Activated T-helper 2 cell treated with anti-CD3 and anti-CD28 coated beads, Interferon-gamma antibody, Interleukin-2, Interleukin-4, amounts not matched to agents 10 μg/mL and 5 μg/mL and 100 μg/mL, durations not matched to agents 14 hours and 24 hours and 36 hours (primary cell): ENCODE measurements at regions of chr6 and their contacts with region 1.

Region 1: DNA sequence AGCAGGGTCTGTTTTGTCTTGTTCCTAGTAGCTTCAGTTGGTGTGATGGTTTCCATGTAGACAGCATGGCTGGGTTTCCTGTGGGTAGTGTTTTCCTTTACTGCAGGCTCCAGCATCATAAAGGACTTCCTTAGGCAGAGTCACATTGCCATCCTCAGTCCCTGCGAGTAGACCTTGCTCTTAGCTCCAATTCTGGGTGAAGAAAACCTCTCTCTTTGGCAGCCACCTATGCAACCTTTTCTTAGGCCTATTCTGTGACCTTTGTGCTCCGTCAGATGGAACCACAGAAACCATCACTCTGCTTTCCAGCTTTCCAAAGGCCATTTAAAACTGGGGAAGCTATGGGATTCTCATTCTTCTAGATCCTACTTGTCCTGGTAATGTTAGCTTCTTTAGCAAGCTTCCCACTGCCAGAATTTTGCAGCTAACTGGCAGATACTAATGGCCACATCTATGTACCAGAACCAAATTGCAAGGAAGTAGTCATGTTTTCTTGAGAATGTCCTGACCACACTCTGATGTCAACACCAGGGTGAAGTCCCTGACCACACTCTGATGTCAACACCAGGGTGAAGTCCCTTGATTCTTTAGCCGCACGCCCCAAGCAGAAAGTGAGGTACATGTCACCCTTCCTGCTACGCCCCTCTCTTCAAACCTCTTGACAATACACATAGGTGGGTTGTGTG is 646.6 kb upstream of the HS3ST5 start:
- DNase-seq: peak; percentile 61
- H3K4me3 Mint-ChIP-seq: no peak overlapping the region
- H3K27ac Mint-ChIP-seq: peak overlapping the region; percentile 98
- H3K4me1 Mint-ChIP-seq: peaks cover 23% of the 10 kb centered on the region
- H3K27me3 Mint-ChIP-seq: no peaks in the 10 kb centered on the region

Region 2: GRCh38 chr6:115016593-115016992 is 27.2 kb after region 1 on chr6:
- intact Hi-C with region 1: no loop called
- DNase-seq: no peak
- H3K4me3 Mint-ChIP-seq: no peak overlapping the region
- H3K27ac Mint-ChIP-seq: no peak overlapping the region
- H3K4me1 Mint-ChIP-seq: no peaks in the 10 kb centered on the region
- H3K27me3 Mint-ChIP-seq: no peaks in the 10 kb centered on the region

Region 3: GRCh38 chr6:115891111-115891669 is 901.8 kb after region 1 on chr6:
- intact Hi-C with region 1: loop called (anchors 2 kb)
- DNase-seq: no peak
- H3K4me3 Mint-ChIP-seq: no peak overlapping the region
- H3K27ac Mint-ChIP-seq: peak overlapping the region; percentile 74
- H3K4me1 Mint-ChIP-seq: peaks cover 23% of the 10 kb centered on the region
- H3K27me3 Mint-ChIP-seq: peaks cover 2% of the 10 kb centered on the region